ENCODE measurements at regions of chr20 and their contacts with region 1.

Region 1: DNA sequence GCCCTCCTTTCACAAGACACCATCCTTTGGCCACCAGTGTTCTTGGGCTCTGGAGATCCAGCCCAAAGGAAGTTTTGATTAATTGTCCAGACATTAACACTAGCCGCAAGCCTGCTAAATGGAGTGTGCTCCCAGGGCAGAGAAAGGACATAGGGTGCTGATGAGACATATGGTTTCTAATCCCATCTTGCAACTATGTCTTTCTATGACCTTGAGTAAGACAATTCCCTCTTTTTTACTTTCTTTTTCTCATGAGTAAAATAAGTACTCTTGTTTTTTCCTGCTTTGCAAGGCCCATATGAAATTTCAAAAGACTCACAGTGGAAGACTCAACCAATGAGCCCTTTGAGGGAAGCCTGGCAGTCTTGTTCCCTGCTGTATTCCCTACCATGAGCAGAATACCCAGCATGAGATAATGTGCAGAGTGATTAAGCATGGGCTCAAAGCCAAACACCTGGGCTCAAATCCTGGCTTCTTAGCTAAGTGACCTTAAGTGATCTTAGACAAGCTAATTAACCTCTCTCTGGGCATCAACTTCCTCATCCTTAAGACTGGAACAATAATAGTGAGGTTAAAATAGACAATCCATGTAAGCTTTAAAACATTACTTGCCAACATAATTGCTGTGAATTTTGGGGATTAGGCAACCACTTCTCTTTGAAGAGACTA is at the start of gene WFDC10B:
- DNase-seq: no peak
- H3K4me3 ChIP-seq: no peak within 1 kb of the TSS
- H3K27ac ChIP-seq: no peak within 1 kb of the TSS
- H3K4me1 ChIP-seq: no peaks in the 10 kb centered on the region
- H3K27me3 ChIP-seq: peaks cover 23% of the 10 kb centered on the region
- CTCF ChIP-seq: no peak
- total RNA-seq, gene WFDC10B: not detected in 2 replicates

Region 2: DNA sequence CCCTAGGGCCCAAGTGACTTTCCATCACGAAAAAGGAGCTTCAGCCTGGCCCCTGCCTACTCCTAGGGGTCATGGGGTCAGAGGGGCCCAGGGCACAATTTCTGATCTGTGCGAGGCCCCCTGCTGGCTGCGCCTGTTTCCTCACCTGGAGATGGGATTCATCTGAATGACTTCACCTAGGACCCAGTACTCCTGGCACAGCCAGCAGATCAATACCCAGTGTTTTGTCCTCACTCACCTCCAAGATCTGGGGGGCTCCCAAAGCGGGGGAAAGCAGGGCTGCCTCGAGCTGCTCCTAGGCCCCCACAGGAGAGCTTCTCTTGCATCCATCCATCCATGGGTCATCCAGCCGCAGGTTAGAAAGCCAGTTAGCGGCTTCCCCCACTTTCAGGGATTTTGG is 446.8 kb after region 1 on chr20:
- CTCF ChIA-PET with region 1: no interaction called
- POLR2A ChIA-PET with region 1: interaction called, 11 read pairs
- intact Hi-C with region 1: no loop called
- DNase-seq: no peak
- H3K4me3 ChIP-seq: no peak overlapping the region
- H3K27ac ChIP-seq: no peak overlapping the region
- H3K4me1 ChIP-seq: no peaks in the 10 kb centered on the region
- H3K27me3 ChIP-seq: peaks cover 3% of the 10 kb centered on the region
- CTCF ChIP-seq: peak; percentile 52

Measured in A673 (cell line).